ENCODE measurements at regions of chr7 and their contacts with region 1.

Region 1: GRCh38 chr7:135662373-135663114 is at the start of gene STMP1:
- DNase-seq: peak; percentile 93 to 98 (median 96)
- ATAC-seq: peak; percentile 97
- H3K4me3 ChIP-seq: peak within 1 kb of the TSS; percentile 89
- H3K4me3 Mint-ChIP-seq: peak within 1 kb of the TSS; percentile 93
- H3K27ac ChIP-seq: peak within 1 kb of the TSS; percentile 47 to 53
- H3K27ac Mint-ChIP-seq: peak within 1 kb of the TSS; percentile 81
- H3K4me1 ChIP-seq: peaks cover 23% of the 10 kb centered on the region
- H3K4me1 Mint-ChIP-seq: peaks cover 48% of the 10 kb centered on the region
- H3K27me3 ChIP-seq: no peaks in the 10 kb centered on the region
- H3K27me3 Mint-ChIP-seq: no peaks in the 10 kb centered on the region
- CTCF ChIP-seq: no peak
- total RNA-seq, gene STMP1: 11.5 to 14.1 TPM

Region 2: GRCh38 chr7:135170274-135170997 is 492.1 kb before region 1 on chr7 and contains the start of gene CYREN:
- CTCF ChIA-PET with region 1: no interaction called
- POLR2A ChIA-PET with region 1: no interaction called
- intact Hi-C with region 1: loop called in 1 of 2 experiments (anchors 10 kb)
- DNase-seq: peak; percentile 75 to 95 (median 87)
- ATAC-seq: peak; percentile 77
- H3K4me3 ChIP-seq: peak within 1 kb of the TSS; percentile 82
- H3K4me3 Mint-ChIP-seq: peak within 1 kb of the TSS; percentile 91
- H3K27ac ChIP-seq: peak within 1 kb of the TSS; percentile 94
- H3K27ac Mint-ChIP-seq: peak within 1 kb of the TSS; percentile 94
- H3K4me1 ChIP-seq: peaks cover 47% of the 10 kb centered on the region
- H3K4me1 Mint-ChIP-seq: peaks cover 48% of the 10 kb centered on the region
- H3K27me3 ChIP-seq: no peaks in the 10 kb centered on the region
- H3K27me3 Mint-ChIP-seq: no peaks in the 10 kb centered on the region
- CTCF ChIP-seq: peak; percentile 76
- total RNA-seq, gene CYREN: 14.0 to 15.8 TPM

Region 3: GRCh38 chr7:135558337-135558767 is 104.2 kb before region 1 on chr7:
- CTCF ChIA-PET with region 1: no interaction called
- POLR2A ChIA-PET with region 1: no interaction called
- intact Hi-C with region 1: loop called in 1 of 2 experiments (anchors 2 kb)
- DNase-seq: peak; percentile 29 to 85 (median 52)
- ATAC-seq: peak; percentile 57
- H3K4me3 ChIP-seq: peak overlapping the region; percentile 99
- H3K4me3 Mint-ChIP-seq: no peak overlapping the region
- H3K27ac ChIP-seq: peak overlapping the region; percentile 93 to 99
- H3K27ac Mint-ChIP-seq: no peak overlapping the region
- H3K4me1 ChIP-seq: peaks cover 13% of the 10 kb centered on the region
- H3K4me1 Mint-ChIP-seq: peaks cover 20% of the 10 kb centered on the region
- H3K27me3 ChIP-seq: no peaks in the 10 kb centered on the region
- H3K27me3 Mint-ChIP-seq: no peaks in the 10 kb centered on the region
- CTCF ChIP-seq: peak; percentile 57

Region 4: GRCh38 chr7:135672560-135673359 is 10.2 kb after region 1 on chr7:
- CTCF ChIA-PET with region 1: interaction called, 11 read pairs
- POLR2A ChIA-PET with region 1: interaction called, 5 read pairs
- intact Hi-C with region 1: no loop called
- DNase-seq: peak in 3 of 14 experiments; percentile 13 to 49 (median 45)
- ATAC-seq: peak; percentile 58
- H3K4me3 ChIP-seq: no peak overlapping the region
- H3K4me3 Mint-ChIP-seq: no peak overlapping the region
- H3K27ac ChIP-seq: no peak overlapping the region
- H3K27ac Mint-ChIP-seq: no peak overlapping the region
- H3K4me1 ChIP-seq: no peaks in the 10 kb centered on the region
- H3K4me1 Mint-ChIP-seq: peaks cover 42% of the 10 kb centered on the region
- H3K27me3 ChIP-seq: no peaks in the 10 kb centered on the region
- H3K27me3 Mint-ChIP-seq: no peaks in the 10 kb centered on the region
- CTCF ChIP-seq: peak; percentile 60

Region 5: DNA sequence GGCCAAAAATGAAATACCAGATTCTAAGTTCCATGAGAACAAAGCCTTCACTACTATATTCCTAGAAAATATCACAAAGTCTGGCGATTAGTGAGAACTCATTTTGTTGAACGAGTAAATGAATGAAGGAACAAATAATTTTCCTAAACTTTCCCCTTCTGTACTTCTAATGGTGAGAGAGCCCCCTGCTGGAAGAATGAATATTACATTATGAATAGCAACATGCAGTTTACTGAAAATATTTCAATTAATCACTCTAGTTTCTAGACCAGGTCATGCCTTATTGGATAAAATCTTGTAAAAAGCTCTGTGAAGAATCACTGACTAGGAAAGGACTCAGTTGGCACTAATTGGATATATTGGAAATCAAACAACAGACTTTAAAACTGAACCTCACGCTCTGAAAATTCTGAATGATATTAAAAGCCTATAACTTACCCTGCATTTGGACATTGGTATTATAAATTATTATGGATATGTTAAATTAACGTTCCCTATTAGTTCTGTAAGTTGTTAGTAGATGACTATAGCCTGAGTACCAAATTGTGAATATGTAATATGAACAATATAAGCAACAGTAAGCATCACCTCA is 347.0 kb after region 1 on chr7:
- CTCF ChIA-PET with region 1: no interaction called
- POLR2A ChIA-PET with region 1: no interaction called
- intact Hi-C with region 1: loop called in 1 of 2 experiments (anchors 5 kb)
- DNase-seq: peak in 3 of 14 experiments; percentile 67 to 72 (median 67)
- ATAC-seq: no peak
- H3K4me3 ChIP-seq: no peak overlapping the region
- H3K4me3 Mint-ChIP-seq: no peak overlapping the region
- H3K27ac ChIP-seq: no peak overlapping the region
- H3K27ac Mint-ChIP-seq: no peak overlapping the region
- H3K4me1 ChIP-seq: no peaks in the 10 kb centered on the region
- H3K4me1 Mint-ChIP-seq: no peaks in the 10 kb centered on the region
- H3K27me3 ChIP-seq: no peaks in the 10 kb centered on the region
- H3K27me3 Mint-ChIP-seq: peaks cover 8% of the 10 kb centered on the region
- CTCF ChIP-seq: peak; percentile 89

Measured in CD4-positive, alpha-beta T cell (primary cell).